H1 (cell line): ENCODE measurements at regions of chr19 and their contacts with region 1.

Region 1: GRCh38 chr19:11137542-11138384 is 17.8 kb downstream of the SPC24 start:
- DNase-seq: peak in 1 of 2 experiments; percentile 79
- H3K4me3 ChIP-seq: peak overlapping the region; percentile 9 to 57 (median 28); a peak in 6 of 8 replicates
- H3K27ac ChIP-seq: no peak overlapping the region
- H3K4me1 ChIP-seq: peaks cover 0 to 17% (median 13%) of the 10 kb centered on the region in 4 experiments; a peak in 6 of 7 replicates
- H3K27me3 ChIP-seq: no peaks in the 10 kb centered on the region
- CTCF ChIP-seq: peak; percentile 62 to 71 (median 69)
- EP300 ChIP-seq: no peak
- POLR2A ChIP-seq: no peak
- RAD21 ChIP-seq: peak; percentile 74 to 76

Region 2: GRCh38 chr19:11155373-11156120 is 17.8 kb after region 1 on chr19 and contains the start of gene SPC24:
- CTCF ChIA-PET with region 1: interaction called, 4 read pairs
- POLR2A ChIA-PET with region 1: interaction called, 37 read pairs
- DNase-seq: peak; percentile 93 to 94
- H3K4me3 ChIP-seq: peak within 1 kb of the TSS; percentile 76 to 93 (median 87)
- H3K27ac ChIP-seq: peak within 1 kb of the TSS; percentile 82; the same call in 1 of the 2 replicates
- H3K4me1 ChIP-seq: peaks cover 0 to 3% (median 0%) of the 10 kb centered on the region in 4 experiments; a peak in 1 of 7 replicates
- H3K27me3 ChIP-seq: no peaks in the 10 kb centered on the region
- CTCF ChIP-seq: no peak
- EP300 ChIP-seq: no peak
- POLR2A ChIP-seq: peak; percentile 88 to 91
- RAD21 ChIP-seq: no peak; a peak in 1 of 4 replicates
- total RNA-seq, gene SPC24: 42.4 and 49.9 TPM in 2 replicates

Region 3: DNA sequence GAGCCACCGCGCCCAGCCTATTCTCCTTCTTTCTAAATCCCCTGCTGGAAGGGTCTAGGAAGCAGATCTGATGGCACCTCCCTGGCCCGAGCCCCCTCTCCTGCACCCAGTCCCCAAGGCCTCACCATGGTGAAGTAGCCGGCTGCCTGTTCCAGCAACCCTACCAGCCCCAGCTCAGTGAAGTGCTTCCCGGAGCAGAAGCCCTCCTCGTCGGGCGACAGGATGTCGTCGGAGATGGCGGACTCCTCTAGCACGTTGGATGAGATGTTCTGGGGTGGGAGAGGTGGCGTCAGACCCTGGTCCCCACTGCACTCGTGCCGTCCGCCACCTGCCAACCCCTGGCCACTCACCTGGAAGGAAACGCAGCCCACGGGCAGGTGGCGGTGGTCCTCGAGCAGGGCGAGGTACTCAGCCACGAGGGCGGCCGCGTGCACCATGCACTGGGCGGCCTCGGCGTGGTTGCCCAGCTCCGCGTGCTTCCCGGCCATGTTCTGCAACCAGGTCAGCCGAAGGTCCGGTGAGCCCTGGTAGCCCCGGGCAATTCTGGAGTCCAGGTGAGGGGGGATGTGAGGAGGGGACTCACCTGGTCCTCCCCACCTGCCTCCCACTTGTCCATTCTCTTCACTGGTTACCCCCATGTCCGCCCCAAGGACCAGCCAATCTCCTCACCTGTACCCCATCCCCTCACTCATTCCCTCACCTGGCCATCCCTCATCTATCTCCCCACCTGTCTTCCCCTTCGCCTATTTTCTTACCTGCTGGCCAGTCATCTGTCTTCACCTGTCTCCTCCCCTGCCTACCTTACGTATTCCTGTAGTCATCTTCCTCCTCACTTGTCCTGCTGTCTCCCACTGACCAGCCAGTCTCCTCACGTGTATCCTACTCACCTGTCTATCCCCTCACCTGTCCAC is 71.1 kb after region 1 on chr19:
- CTCF ChIA-PET with region 1: interaction called, 16 read pairs
- POLR2A ChIA-PET with region 1: no interaction called
- DNase-seq: no peak
- H3K4me3 ChIP-seq: no peak overlapping the region
- H3K27ac ChIP-seq: no peak overlapping the region
- H3K4me1 ChIP-seq: no peaks in the 10 kb centered on the region
- H3K27me3 ChIP-seq: no peaks in the 10 kb centered on the region
- CTCF ChIP-seq: no peak
- EP300 ChIP-seq: no peak
- POLR2A ChIP-seq: no peak
- RAD21 ChIP-seq: no peak

Region 4: GRCh38 chr19:11387162-11388034 is 249.6 kb after region 1 on chr19:
- CTCF ChIA-PET with region 1: no interaction called
- POLR2A ChIA-PET with region 1: no interaction called
- DNase-seq: no peak
- H3K4me3 ChIP-seq: no peak overlapping the region
- H3K27ac ChIP-seq: no peak overlapping the region
- H3K4me1 ChIP-seq: peaks cover 0 to 3% (median 0%) of the 10 kb centered on the region in 4 experiments; a peak in 2 of 7 replicates
- H3K27me3 ChIP-seq: no peaks in the 10 kb centered on the region
- CTCF ChIP-seq: no peak
- EP300 ChIP-seq: no peak
- POLR2A ChIP-seq: no peak
- RAD21 ChIP-seq: no peak